Activated CD8-positive, alpha-beta T cell treated with anti-CD3 and anti-CD28 coated beads, Interleukin-2, amount 10 ng/mL, durations not matched to agents 7 days and 5 days (primary cell): ENCODE measurements at regions of chr16 and their contacts with region 1.

Region 1: GRCh38 chr16:81623363-81624102 is 155.6 kb upstream of the PLCG2 start:
- DNase-seq: peak; percentile 71
- ATAC-seq: peak; percentile 54
- H3K4me3 Mint-ChIP-seq: no peak overlapping the region
- H3K27ac Mint-ChIP-seq: peak overlapping the region; percentile 8
- H3K4me1 Mint-ChIP-seq: peaks cover 26% of the 10 kb centered on the region
- H3K27me3 Mint-ChIP-seq: no peaks in the 10 kb centered on the region

Region 2: DNA sequence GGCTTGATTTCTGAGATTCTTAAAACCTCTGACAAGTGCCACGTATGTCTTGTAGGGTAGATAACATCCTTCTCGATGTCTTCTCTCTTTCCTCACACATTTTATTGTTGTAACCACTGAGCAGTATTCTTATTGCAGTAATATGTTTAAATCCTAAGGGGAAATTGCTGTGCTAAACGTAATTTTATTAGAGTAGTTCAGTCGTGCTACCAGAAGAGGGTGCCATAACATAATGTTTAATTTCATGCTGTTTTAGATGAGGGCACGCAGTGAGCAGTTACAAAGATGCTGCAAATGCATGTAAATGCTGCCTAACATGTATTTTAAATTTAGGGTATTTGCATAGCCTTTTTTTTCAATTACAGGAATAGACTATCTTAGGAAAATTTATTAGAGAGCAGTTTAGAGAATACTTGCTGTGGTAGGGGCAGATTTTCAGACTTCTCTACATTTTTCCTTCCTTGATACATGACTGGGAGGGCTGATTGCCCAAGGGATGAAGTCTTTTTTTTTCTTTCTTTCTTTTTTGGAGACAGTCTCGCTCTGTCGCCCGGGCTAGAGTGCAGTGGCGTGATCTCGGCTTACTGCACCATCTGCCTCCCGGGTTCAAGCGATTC is 257.1 kb before region 1 on chr16:
- CTCF ChIA-PET with region 1: interaction called, 11 read pairs
- POLR2A ChIA-PET with region 1: no interaction called
- DNase-seq: no peak
- ATAC-seq: peak; percentile 63
- H3K4me3 Mint-ChIP-seq: no peak overlapping the region
- H3K27ac Mint-ChIP-seq: no peak overlapping the region
- H3K4me1 Mint-ChIP-seq: peaks cover 11% of the 10 kb centered on the region
- H3K27me3 Mint-ChIP-seq: no peaks in the 10 kb centered on the region

Region 3: DNA sequence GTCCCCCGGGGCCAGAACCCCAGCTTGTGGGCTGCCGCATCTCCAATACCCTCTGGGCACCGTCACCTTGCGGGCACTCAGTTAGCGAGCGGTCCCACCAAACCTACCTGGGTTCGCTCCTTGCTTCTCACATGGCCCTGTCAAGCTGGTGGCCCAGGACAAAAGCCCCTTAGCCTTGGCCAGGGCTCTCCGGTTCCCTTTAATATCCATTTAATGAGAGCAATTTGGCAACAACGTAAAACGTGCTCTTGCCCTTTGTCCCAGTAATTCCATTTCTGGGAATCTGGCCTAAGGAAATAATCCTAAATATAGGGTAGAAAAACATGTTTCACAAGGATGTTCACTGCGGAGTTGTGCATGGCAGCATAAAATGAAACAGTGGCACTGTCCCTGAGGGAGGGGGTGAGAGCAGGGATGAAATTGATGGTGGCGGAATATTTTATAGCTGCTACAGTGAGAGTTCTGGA is 21.8 kb before region 1 on chr16:
- CTCF ChIA-PET with region 1: no interaction called
- POLR2A ChIA-PET with region 1: no interaction called
- DNase-seq: no peak
- ATAC-seq: no peak
- H3K4me3 Mint-ChIP-seq: no peak overlapping the region
- H3K27ac Mint-ChIP-seq: no peak overlapping the region
- H3K4me1 Mint-ChIP-seq: peaks cover 2% of the 10 kb centered on the region
- H3K27me3 Mint-ChIP-seq: no peaks in the 10 kb centered on the region

Region 4: GRCh38 chr16:81696961-81697615 is 73.6 kb after region 1 on chr16:
- CTCF ChIA-PET with region 1: interaction called, 34 read pairs
- POLR2A ChIA-PET with region 1: no interaction called
- DNase-seq: peak; percentile 62
- ATAC-seq: peak; percentile 38
- H3K4me3 Mint-ChIP-seq: no peak overlapping the region
- H3K27ac Mint-ChIP-seq: peak overlapping the region; percentile 46
- H3K4me1 Mint-ChIP-seq: peaks cover 5% of the 10 kb centered on the region
- H3K27me3 Mint-ChIP-seq: no peaks in the 10 kb centered on the region

Region 5: DNA sequence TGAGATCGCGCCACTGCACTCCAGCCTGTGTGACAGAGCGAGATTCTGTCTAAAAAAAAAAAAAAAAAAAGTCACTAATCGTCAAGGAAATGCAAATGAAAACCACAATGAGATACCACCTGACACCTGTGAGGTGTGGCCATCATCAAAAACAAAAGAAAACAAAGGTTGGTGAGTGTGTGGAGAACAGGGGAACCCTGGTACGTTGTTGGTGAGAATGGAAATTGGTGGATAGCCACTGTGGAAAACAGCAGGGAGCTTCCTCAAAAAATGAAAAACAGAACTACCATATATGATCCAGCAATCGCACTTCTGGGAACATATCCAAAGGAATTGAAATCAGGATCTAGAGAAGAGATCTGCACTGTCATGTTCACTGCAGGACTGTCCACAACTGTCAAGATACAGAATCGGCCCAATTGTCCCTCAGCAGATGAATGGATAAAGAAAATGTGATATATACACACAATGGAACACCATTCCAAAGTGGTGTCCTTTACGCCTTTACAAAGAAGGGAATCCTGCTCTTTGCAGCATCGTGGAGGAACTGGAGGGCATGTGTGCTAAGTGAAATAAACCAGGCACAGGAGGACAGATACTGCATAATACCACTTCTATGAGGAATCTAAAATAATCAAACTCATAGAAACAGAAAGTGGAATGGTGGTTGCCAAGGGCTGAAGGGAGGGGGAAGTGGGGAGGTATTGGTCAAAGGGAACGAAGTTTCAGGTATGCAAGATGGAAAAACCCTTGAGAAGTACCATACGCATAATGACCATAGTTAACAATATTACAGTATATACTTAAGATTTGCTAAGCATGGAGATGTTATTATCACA is 92.0 kb after region 1 on chr16:
- CTCF ChIA-PET with region 1: interaction called, 14 read pairs
- POLR2A ChIA-PET with region 1: interaction called, 3 read pairs
- DNase-seq: peak; percentile 61
- ATAC-seq: peak; percentile 58
- H3K4me3 Mint-ChIP-seq: peak overlapping the region; percentile 38
- H3K27ac Mint-ChIP-seq: peak overlapping the region; percentile 68
- H3K4me1 Mint-ChIP-seq: peaks cover 45% of the 10 kb centered on the region
- H3K27me3 Mint-ChIP-seq: no peaks in the 10 kb centered on the region

Region 6: DNA sequence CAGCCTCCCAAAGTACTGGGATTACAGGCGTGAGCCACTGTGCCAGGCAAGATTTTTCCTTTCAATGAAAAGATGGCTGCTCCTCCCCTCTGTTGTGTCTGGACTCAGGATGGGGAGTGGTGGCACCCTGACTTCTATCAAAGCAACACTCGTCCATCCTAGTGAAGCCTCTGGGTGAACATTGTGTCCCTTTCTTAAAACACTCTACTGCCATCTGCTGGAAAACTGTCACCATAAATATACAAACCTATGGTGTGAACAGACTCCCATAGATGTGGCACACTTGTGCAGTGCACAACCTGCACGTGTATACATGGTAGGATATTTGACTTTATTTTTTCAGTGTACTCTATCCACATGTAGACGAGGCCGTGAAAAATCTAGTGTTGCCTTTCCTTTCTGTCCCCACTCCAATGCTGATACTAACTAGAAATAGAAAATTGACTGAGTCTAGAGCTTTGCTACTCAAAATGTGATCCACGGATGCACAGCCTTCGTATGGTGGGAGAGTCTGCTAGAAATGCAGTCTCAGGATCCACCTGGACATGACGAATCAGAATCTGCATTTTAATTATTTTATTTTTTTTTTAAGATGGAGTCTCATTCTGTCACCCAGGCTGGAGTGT is 99.7 kb after region 1 on chr16:
- CTCF ChIA-PET with region 1: interaction called, 14 read pairs
- POLR2A ChIA-PET with region 1: interaction called, 3 read pairs
- DNase-seq: peak; percentile 72
- ATAC-seq: peak; percentile 85
- H3K4me3 Mint-ChIP-seq: no peak overlapping the region
- H3K27ac Mint-ChIP-seq: no peak overlapping the region
- H3K4me1 Mint-ChIP-seq: peaks cover 16% of the 10 kb centered on the region
- H3K27me3 Mint-ChIP-seq: peaks cover 15% of the 10 kb centered on the region